Ascending aorta (tissue), 2 donors: ENCODE measurements at regions of chr1 and their contacts with region 1.

Region 1: DNA sequence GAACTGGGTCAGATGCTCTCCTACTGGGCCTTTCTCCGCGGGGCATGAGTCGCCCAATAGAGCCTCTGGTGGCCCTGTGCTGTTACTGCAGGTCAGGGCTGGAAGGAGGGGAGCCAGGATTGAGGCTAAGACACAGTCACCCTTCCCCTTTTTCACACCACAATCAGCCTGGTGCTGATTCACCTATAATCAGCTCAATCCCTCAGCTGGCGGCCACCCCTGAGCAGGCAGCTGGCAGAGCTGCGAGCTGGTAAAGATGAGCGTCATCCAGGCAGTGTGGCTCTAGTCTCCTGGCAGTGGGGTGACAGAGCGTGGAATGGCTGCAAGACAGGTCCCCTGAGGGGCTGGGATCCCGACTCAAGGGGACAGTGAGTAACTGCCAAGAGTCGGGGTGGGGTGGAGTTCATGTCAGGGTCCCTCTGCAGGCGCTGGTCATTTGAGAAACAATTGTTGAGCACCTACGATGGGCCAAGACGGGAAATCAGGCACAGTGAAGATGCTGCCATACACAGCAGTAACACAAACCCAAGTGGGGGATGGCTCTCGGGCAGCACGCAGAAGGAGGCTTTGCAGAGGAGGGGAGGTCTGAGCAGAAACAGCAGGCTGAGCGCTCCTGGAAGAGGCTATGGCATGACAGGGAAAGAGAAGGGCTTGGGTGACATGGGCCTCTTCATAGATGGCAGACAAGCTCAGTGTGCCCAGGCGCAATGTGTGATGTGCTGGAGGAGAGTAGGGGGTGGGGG is 21.8 kb downstream of the ATF3 start:
- DNase-seq: peak; percentile 31 to 80
- H3K4me3 ChIP-seq: no peak overlapping the region
- H3K27ac ChIP-seq: no peak overlapping the region
- H3K4me1 ChIP-seq: no peaks in the 10 kb centered on the region
- H3K27me3 ChIP-seq: no peaks in the 10 kb centered on the region
- CTCF ChIP-seq: peak; percentile 80 to 84 (median 84)

Region 2: GRCh38 chr1:212477014-212477679 is 153.2 kb before region 1 on chr1:
- intact Hi-C with region 1: loop called (anchors 1 kb)
- DNase-seq: peak; percentile 45 to 92
- H3K4me3 ChIP-seq: no peak overlapping the region
- H3K27ac ChIP-seq: no peak overlapping the region
- H3K4me1 ChIP-seq: peaks cover 0 to 15% of the 10 kb centered on the region in 2 donors
- H3K27me3 ChIP-seq: no peaks in the 10 kb centered on the region
- CTCF ChIP-seq: peak; percentile 80 to 89 (median 83)

Region 3: DNA sequence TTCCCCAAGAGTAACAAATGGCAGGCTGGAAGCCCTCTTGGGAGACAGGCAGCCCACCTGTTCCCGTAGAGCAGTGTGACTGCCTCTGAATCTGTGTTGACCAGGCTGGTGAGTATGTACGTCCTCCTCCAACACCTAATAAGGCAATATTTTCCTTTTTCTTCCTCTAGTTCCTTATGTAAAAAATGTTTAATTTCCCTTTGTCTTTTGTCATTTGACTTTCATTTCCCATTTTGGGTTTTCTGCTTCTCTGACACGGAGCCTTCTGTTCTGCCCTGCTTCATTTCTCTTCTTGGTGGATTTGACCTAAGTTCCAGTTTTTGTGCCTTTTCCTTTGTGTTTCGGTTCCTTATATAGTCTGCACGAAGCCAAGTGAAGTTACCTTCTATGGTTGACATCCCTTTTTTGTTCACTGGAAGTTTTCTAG is 87.6 kb before region 1 on chr1:
- intact Hi-C with region 1: no loop called
- DNase-seq: no peak
- H3K4me3 ChIP-seq: no peak overlapping the region
- H3K27ac ChIP-seq: no peak overlapping the region
- H3K4me1 ChIP-seq: no peaks in the 10 kb centered on the region
- H3K27me3 ChIP-seq: no peaks in the 10 kb centered on the region
- CTCF ChIP-seq: no peak